Posterior cingulate gyrus (tissue), 11 donors: ENCODE measurements at regions of chr9 and their contacts with region 1.

Region 1: DNA sequence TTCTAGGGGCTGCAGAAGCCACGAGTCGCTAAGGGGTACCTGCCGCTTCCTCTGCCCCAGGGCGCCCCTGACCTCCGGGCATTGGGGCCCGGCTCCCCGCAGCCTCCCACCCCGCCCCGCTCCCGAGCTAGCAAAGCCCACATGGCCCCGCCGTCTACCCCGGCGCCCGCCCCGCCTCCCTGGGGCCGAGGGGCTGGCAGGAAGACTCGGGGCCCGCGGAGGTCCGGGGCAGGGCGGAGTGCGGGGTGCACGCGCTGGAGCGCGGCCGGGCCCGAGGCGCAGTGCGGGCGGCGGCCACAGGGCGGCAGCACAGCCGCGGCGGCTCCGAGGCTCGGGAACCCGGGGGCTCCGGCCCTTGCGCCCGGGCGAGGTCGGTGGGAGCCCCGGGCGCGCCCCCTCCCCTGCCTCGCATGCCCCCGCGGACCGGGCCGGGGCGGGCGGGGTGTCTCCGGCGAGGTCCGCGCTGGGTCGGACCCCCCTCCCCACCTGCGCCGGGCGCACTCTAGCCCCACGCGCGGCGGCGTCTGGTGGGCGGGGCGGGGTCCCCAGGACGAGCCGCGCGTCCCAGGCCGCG is 6.7 kb downstream of the NRARP start:
- DNase-seq: peak in 1 of 10 donors; percentile 5

Region 2: GRCh38 chr9:137406876-137407589 is 111.7 kb after region 1 on chr9:
- intact Hi-C with region 1: loop called (anchors 2 kb)
- DNase-seq: peak in 9 of 10 donors; percentile 58 to 96 (median 71)